ENCODE measurements at regions of chr3 and their contacts with region 1.

Region 1: DNA sequence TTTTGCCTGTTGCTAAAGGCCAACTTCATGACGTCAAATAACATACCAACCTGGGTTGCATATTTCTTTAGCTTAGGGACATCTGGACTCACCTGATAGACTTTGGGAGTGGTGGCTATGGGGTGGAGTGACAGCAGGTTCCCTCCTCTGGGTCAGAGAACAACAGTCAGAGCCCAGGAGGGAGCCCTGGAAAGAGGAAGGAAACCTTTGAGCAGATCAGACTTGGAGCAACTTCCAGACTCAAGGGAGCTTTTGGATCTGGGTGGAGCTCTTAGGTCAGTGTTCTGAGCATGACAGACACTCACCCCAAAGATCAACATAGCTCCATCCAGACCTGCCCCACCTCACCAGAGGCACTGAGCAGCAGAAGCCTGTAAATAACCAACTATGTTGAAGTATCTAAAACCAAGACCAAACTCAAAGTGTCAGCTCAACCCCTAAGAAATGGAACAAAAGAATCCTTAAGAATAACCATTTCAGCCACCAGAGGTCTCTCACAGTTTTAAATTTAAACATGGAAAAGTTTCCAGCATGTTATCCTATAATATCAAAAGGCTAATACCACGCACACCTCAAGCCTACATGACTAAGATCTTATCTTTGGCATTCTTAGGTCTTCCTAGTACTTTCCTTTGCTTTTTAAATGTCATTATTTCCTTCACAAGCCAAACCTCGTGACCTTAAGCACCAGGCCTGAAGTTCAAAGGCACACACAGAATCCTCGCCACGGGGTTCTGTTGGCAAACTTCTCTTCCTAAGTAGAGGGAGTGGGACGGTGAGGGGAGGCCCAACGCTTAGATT is 56.4 kb downstream of the UMPS start:
- DNase-seq: peak; percentile 7 to 68
- H3K4me3 ChIP-seq: no peak overlapping the region
- H3K27ac ChIP-seq: peak overlapping the region; percentile 50
- H3K4me1 ChIP-seq: peaks cover 8% of the 10 kb centered on the region
- H3K27me3 ChIP-seq: no peaks in the 10 kb centered on the region
- CTCF ChIP-seq: peak; percentile 68

Region 2: GRCh38 chr3:124747111-124747981 is 39.3 kb before region 1 on chr3:
- CTCF ChIA-PET with region 1: no interaction called
- POLR2A ChIA-PET with region 1: no interaction called
- intact Hi-C with region 1: no loop called
- DNase-seq: no peak
- H3K4me3 ChIP-seq: no peak overlapping the region
- H3K27ac ChIP-seq: no peak overlapping the region
- H3K4me1 ChIP-seq: no peaks in the 10 kb centered on the region
- H3K27me3 ChIP-seq: no peaks in the 10 kb centered on the region
- CTCF ChIP-seq: no peak

Region 3: GRCh38 chr3:124812291-124813265 is 25.9 kb after region 1 on chr3:
- CTCF ChIA-PET with region 1: interaction called, 16 read pairs
- POLR2A ChIA-PET with region 1: no interaction called
- intact Hi-C with region 1: no loop called
- DNase-seq: peak; percentile 92 to 95
- H3K4me3 ChIP-seq: peak overlapping the region; percentile 35; the same call in 1 of the 2 replicates
- H3K27ac ChIP-seq: peak overlapping the region; percentile 96
- H3K4me1 ChIP-seq: peaks cover 52% of the 10 kb centered on the region
- H3K27me3 ChIP-seq: no peaks in the 10 kb centered on the region
- CTCF ChIP-seq: no peak

Region 4: DNA sequence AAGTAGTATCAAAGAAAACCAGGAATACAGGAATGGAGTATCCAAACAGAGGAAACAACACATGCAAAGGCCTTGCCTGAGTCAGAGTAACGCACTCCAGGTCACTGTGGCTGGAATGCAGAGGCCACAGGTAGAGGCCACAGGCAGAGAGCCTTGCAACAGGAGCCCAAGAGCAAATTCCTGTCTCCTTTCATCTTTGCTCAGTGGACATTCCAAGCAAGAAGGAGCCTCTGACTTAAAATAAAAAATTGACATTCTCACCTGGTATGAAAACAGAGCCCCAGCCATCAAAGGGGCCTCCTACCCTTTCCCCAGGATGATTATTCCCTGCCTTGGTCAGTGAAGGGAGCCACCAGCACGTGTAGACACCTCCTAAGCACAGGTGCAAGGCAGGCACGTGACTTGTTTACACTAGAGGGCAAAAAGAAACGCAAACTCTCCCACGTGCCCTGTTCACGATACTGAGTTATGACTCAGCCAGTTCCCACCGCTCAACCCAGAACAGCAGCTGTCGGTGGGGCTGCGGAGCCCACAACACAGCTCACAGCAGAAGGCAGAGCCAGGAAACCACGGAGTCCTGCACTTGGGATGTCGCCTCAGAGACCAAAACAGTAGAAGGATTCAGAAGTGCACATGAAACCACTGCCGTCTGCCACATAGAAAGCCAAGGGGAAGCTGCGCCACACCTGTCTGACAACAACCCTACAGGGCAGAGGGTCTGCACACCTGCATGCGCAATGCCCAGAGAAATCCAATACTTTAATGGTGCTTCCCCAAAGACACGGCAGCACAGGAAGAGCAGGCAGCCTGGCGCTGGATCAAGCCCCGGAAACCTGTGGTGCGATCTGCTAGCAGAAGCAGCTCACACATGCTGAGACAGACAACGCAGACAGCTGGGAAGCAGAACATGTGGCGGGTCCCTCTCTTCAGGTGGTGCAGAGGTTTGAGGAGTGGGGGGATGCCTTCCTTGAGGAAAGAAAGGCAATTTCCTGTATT is 48.4 kb after region 1 on chr3:
- CTCF ChIA-PET with region 1: no interaction called
- POLR2A ChIA-PET with region 1: no interaction called
- intact Hi-C with region 1: loop called (anchors 2 kb)
- DNase-seq: peak; percentile 85 to 98
- H3K4me3 ChIP-seq: peak overlapping the region; percentile 42; the same call in 1 of the 2 replicates
- H3K27ac ChIP-seq: peak overlapping the region; percentile 99
- H3K4me1 ChIP-seq: peaks cover 79% of the 10 kb centered on the region
- H3K27me3 ChIP-seq: no peaks in the 10 kb centered on the region
- CTCF ChIP-seq: no peak

Region 5: GRCh38 chr3:124845406-124845805 is 58.8 kb after region 1 on chr3:
- CTCF ChIA-PET with region 1: interaction called, 11 read pairs
- POLR2A ChIA-PET with region 1: no interaction called
- intact Hi-C with region 1: no loop called
- DNase-seq: peak; percentile 76 to 88
- H3K4me3 ChIP-seq: no peak overlapping the region
- H3K27ac ChIP-seq: peak overlapping the region; percentile 69
- H3K4me1 ChIP-seq: peaks cover 27% of the 10 kb centered on the region
- H3K27me3 ChIP-seq: no peaks in the 10 kb centered on the region
- CTCF ChIP-seq: no peak

Region 6: DNA sequence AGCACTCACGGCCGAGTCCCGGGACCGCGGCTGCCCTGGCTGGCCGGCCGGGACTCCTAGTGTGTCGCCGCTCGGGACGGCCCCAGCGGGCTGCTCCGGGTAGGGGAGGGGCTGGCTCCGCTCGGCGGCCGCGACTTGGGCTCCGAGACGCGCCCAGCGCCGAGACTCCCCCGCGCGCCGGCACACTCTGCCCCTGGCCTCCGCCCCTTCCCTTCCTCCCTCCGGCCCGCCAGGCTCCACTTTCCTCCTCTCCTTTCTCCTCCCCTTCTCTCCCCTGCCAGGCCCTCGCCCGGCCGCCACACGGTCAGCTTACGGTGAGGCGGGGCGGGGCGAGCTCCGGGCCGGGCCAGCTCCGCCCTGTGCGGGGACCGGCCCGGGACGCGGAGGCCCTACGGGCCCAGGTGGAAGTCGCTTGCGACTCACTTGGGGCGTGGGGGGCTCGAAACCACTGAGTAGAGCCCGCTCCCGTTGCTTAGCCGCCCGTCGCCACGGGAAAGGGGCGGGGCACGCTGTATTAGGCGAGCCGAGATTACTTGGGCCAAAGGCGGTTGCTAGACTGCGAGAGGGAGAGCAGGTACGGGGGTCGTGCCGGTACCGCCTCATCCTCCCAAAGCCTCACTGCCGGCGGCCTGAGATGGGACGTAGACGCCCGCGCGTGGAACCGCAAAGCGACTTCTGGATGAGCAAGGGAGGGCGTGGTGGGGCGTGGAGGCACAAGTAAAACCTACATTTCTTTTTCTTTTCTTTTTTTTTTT is 100.7 kb after region 1 on chr3 and contains the start of gene ITGB5:
- CTCF ChIA-PET with region 1: interaction called, 3 read pairs
- POLR2A ChIA-PET with region 1: interaction called, 13 read pairs
- intact Hi-C with region 1: loop called (anchors 2 kb)
- DNase-seq: peak; percentile 56 to 89
- H3K4me3 ChIP-seq: peak within 1 kb of the TSS; percentile 84
- H3K27ac ChIP-seq: peak within 1 kb of the TSS; percentile 69
- H3K4me1 ChIP-seq: peaks cover 41% of the 10 kb centered on the region
- H3K27me3 ChIP-seq: no peaks in the 10 kb centered on the region
- CTCF ChIP-seq: no peak
- total RNA-seq, gene ITGB5: 226 and 287 TPM in 2 replicates

Region 7: GRCh38 chr3:124905849-124906248 is 119.2 kb after region 1 on chr3:
- CTCF ChIA-PET with region 1: interaction called, 36 read pairs
- POLR2A ChIA-PET with region 1: no interaction called
- intact Hi-C with region 1: loop called (anchors 1 kb)
- DNase-seq: no peak
- H3K4me3 ChIP-seq: no peak overlapping the region
- H3K27ac ChIP-seq: no peak overlapping the region
- H3K4me1 ChIP-seq: no peaks in the 10 kb centered on the region
- H3K27me3 ChIP-seq: no peaks in the 10 kb centered on the region
- CTCF ChIP-seq: no peak

Region 8: DNA sequence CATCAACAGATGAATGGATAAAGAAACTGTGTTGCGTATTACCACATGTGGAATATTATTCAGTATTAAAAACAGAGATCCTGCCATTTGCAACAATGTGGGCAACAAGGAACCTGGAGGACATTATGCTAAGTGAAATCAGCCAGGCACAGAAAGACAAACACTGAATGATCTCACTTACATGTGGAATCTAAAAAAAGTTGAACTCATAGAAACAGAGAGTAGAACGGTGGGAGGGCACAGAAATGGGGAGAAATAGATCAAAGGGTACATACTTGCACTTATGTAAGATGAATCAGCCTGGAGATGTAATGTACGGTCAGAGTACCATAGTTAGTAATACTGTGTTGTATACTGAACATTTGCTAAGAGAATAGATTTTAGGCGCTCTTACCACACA is 177.7 kb after region 1 on chr3:
- CTCF ChIA-PET with region 1: interaction called, 11 read pairs
- POLR2A ChIA-PET with region 1: no interaction called
- intact Hi-C with region 1: no loop called
- DNase-seq: no peak
- H3K4me3 ChIP-seq: no peak overlapping the region
- H3K27ac ChIP-seq: no peak overlapping the region
- H3K4me1 ChIP-seq: no peaks in the 10 kb centered on the region; the same call in 1 of the 2 replicates
- H3K27me3 ChIP-seq: no peaks in the 10 kb centered on the region
- CTCF ChIP-seq: no peak